ENCODE measurements at regions of chr1 and their contacts with region 1.

Region 1: GRCh38 chr1:12407050-12407961 is 177.5 kb downstream of the VPS13D start:
- DNase-seq: no peak

Region 2: GRCh38 chr1:12344596-12345349 is 62.5 kb before region 1 on chr1:
- intact Hi-C with region 1: loop called (anchors 10 kb)
- DNase-seq: no peak

Measured in cardiac septum (tissue), 1 donor.